Cardiac septum (tissue), 1 donor: ENCODE measurements at regions of chr6 and their contacts with region 1.

Region 1: GRCh38 chr6:56542364-56543331 is 100.0 kb downstream of the DST start:
- DNase-seq: peak; percentile 94

Region 2: DNA sequence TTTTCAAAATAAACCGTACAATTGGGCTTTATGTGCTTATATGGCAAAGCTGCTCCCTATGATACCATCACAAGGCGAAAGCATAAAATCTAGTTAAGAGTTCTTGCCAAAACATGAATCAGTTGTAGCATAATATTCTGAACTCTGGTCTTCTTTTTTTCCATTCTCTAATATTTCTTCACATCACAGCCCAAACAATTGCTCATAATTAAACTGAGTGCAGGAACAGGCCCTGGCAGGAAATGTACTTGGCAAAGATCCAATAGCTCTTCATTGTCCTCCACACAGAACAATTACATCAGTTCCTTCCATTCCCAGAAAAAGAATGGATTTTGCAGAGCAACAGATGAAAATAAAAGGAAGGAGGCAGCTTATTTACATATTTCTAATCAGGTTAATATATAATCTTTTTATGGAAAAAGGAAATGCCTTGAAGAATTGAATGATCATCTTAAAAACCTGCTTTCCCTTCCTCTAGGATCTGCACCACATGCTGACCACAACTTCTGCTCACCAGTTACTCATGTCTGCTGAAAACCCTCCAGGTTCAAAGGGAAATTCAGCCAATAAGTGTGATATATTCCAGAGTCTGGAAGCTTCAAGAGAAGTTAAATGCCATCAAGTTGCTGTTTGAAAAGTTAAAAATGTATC is 172.0 kb before region 1 on chr6:
- intact Hi-C with region 1: loop called (anchors 1 kb)
- DNase-seq: no peak

Region 3: GRCh38 chr6:56491606-56492328 is 50.9 kb before region 1 on chr6:
- intact Hi-C with region 1: loop called (anchors 5 kb)
- DNase-seq: peak; percentile 74